ENCODE measurements at regions of chr16 and their contacts with region 1.

Region 1: DNA sequence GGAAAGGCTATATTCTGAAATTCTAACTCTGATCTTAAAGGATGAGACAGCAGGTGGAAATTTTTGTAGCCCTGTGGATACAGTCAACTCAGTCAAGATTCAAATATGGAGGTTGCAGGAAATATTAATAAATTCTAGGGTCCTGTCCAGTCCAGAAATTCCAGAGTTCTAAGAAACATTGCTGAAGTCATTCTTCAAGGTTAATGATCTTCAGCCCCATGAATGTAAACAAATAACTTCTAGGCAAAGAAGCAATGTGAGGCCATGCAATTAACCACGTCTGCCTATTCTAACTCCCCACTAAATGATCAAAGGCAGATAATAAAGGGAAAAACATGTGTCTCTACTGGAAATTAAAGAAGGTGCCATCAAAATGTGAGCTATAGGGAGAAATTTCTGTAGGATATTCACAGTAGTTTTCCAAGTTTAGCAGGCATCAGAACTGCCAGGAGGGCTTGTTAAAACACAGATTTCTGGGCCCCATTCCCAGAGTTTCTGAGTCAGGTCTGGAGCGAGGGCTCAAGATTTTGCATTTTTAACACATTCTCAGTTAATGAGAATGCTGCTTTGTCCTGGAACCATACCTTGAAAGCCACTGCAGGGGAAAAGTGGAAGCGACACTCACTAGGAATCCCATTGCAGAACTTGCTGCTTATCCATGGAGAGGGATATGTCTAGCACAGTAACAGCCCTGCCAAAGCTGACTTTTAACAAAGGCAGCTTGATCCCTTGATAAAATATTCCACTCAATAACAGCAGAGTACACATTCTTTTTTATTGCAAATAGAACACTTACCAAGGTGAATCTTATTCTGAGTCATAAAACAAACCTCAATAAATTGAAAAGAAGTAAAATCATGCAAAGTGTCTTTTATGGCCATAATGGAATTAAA is 61.8 kb downstream of the DNAH3 start:
- DNase-seq: no peak
- ATAC-seq: no peak
- H3K4me3 ChIP-seq: no peak overlapping the region
- H3K27ac ChIP-seq: no peak overlapping the region
- H3K4me1 ChIP-seq: peaks cover 0 to 2% (median 0%) of the 10 kb centered on the region in 12 donors
- H3K27me3 ChIP-seq: no peaks in the 10 kb centered on the region
- CTCF ChIP-seq: no peak
- POLR2A ChIP-seq: no peak

Region 2: GRCh38 chr16:20799599-20799998 is 289.3 kb before region 1 on chr16:
- intact Hi-C with region 1: loop called in 4 of 10 experiments (anchors 2 to 10 kb)
- DNase-seq: no peak
- ATAC-seq: peak in 1 of 4 donors; percentile 46
- H3K4me3 ChIP-seq: no peak overlapping the region
- H3K27ac ChIP-seq: no peak overlapping the region
- H3K4me1 ChIP-seq: peaks cover 0 to 1% (median 0%) of the 10 kb centered on the region in 12 donors
- H3K27me3 ChIP-seq: no peaks in the 10 kb centered on the region
- CTCF ChIP-seq: peak in 11 of 12 donors; percentile 30 to 70 (median 57)
- POLR2A ChIP-seq: no peak

Region 3: DNA sequence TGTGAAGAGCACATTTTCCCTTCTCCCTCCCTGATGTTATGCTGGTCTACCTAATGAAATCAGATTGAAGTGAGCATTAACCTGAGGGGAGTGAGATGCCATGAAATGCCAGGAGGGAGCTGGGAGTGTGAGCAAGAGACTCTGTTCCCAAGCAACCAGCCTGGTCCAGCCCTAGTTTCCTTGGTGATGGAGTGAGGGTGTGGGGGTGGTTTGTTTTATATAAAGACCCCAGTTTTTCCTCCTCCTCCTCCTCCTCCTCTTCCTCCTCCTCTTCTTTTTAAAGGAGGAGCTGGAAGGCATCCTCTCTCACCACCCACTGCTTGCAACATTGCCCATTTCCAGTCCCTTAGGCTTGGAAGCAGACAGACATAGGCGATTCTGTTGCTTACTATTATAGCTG is 35.3 kb before region 1 on chr16:
- intact Hi-C with region 1: no loop called
- DNase-seq: no peak
- ATAC-seq: no peak
- H3K4me3 ChIP-seq: no peak overlapping the region
- H3K27ac ChIP-seq: no peak overlapping the region
- H3K4me1 ChIP-seq: no peaks in the 10 kb centered on the region
- H3K27me3 ChIP-seq: no peaks in the 10 kb centered on the region
- CTCF ChIP-seq: no peak
- POLR2A ChIP-seq: no peak